B cell (primary cell): ENCODE measurements at regions of chr13 and their contacts with region 1.

Region 1: GRCh38 chr13:23579072-23579895 is 9.1 kb downstream of the TNFRSF19 start:
- DNase-seq: peak; percentile 93
- ATAC-seq: peak; percentile 96
- H3K4me3 ChIP-seq: peak overlapping the region; percentile 1 to 77 (median 70)
- H3K4me3 Mint-ChIP-seq: peak overlapping the region; percentile 83
- H3K27ac ChIP-seq: peak overlapping the region; percentile 66 to 83
- H3K27ac Mint-ChIP-seq: peak overlapping the region; percentile 59
- H3K4me1 ChIP-seq: peaks cover 12 to 16% of the 10 kb centered on the region in 2 donors
- H3K4me1 Mint-ChIP-seq: peaks cover 17% of the 10 kb centered on the region
- H3K27me3 ChIP-seq: peaks cover 3 to 30% (median 21%) of the 10 kb centered on the region in 4 experiments
- H3K27me3 Mint-ChIP-seq: peaks cover 56% of the 10 kb centered on the region
- CTCF ChIP-seq: no peak

Region 2: GRCh38 chr13:23384111-23384510 is 195.2 kb before region 1 on chr13:
- CTCF ChIA-PET with region 1: no interaction called
- POLR2A ChIA-PET with region 1: no interaction called
- intact Hi-C with region 1: loop called (anchors 1 kb)
- DNase-seq: peak; percentile 92
- ATAC-seq: peak; percentile 98
- H3K4me3 ChIP-seq: no peak overlapping the region
- H3K4me3 Mint-ChIP-seq: peak overlapping the region; percentile 40
- H3K27ac ChIP-seq: peak overlapping the region; percentile 37 to 68
- H3K27ac Mint-ChIP-seq: peak overlapping the region; percentile 76
- H3K4me1 ChIP-seq: peaks cover 30% of the 10 kb centered on the region in 2 donors
- H3K4me1 Mint-ChIP-seq: peaks cover 31% of the 10 kb centered on the region
- H3K27me3 ChIP-seq: peaks cover 0 to 4% (median 0%) of the 10 kb centered on the region in 4 experiments
- H3K27me3 Mint-ChIP-seq: peaks cover 4% of the 10 kb centered on the region
- CTCF ChIP-seq: no peak

Region 3: GRCh38 chr13:23496255-23496654 is 83.0 kb before region 1 on chr13:
- CTCF ChIA-PET with region 1: no interaction called
- POLR2A ChIA-PET with region 1: interaction called, 12 read pairs
- intact Hi-C with region 1: no loop called
- DNase-seq: no peak
- ATAC-seq: no peak
- H3K4me3 ChIP-seq: no peak overlapping the region
- H3K4me3 Mint-ChIP-seq: no peak overlapping the region
- H3K27ac ChIP-seq: no peak overlapping the region
- H3K27ac Mint-ChIP-seq: no peak overlapping the region
- H3K4me1 ChIP-seq: no peaks in the 10 kb centered on the region
- H3K4me1 Mint-ChIP-seq: no peaks in the 10 kb centered on the region
- H3K27me3 ChIP-seq: peaks cover 0 to 6% (median 1%) of the 10 kb centered on the region in 4 experiments
- H3K27me3 Mint-ChIP-seq: peaks cover 19% of the 10 kb centered on the region
- CTCF ChIP-seq: no peak

Region 4: GRCh38 chr13:23810685-23811240 is 231.5 kb after region 1 on chr13:
- CTCF ChIA-PET with region 1: no interaction called
- POLR2A ChIA-PET with region 1: no interaction called
- intact Hi-C with region 1: loop called (anchors 2 kb)
- DNase-seq: peak; percentile 67
- ATAC-seq: peak; percentile 56
- H3K4me3 ChIP-seq: no peak overlapping the region
- H3K4me3 Mint-ChIP-seq: peak overlapping the region; percentile 23
- H3K27ac ChIP-seq: peak overlapping the region in 1 of 2 donors; percentile 50
- H3K27ac Mint-ChIP-seq: peak overlapping the region; percentile 43
- H3K4me1 ChIP-seq: peaks cover 54 to 59% of the 10 kb centered on the region in 2 donors
- H3K4me1 Mint-ChIP-seq: peaks cover 43% of the 10 kb centered on the region
- H3K27me3 ChIP-seq: peaks cover 0 to 2% (median 0%) of the 10 kb centered on the region in 4 experiments
- H3K27me3 Mint-ChIP-seq: no peaks in the 10 kb centered on the region
- CTCF ChIP-seq: peak; percentile 79

Region 5: DNA sequence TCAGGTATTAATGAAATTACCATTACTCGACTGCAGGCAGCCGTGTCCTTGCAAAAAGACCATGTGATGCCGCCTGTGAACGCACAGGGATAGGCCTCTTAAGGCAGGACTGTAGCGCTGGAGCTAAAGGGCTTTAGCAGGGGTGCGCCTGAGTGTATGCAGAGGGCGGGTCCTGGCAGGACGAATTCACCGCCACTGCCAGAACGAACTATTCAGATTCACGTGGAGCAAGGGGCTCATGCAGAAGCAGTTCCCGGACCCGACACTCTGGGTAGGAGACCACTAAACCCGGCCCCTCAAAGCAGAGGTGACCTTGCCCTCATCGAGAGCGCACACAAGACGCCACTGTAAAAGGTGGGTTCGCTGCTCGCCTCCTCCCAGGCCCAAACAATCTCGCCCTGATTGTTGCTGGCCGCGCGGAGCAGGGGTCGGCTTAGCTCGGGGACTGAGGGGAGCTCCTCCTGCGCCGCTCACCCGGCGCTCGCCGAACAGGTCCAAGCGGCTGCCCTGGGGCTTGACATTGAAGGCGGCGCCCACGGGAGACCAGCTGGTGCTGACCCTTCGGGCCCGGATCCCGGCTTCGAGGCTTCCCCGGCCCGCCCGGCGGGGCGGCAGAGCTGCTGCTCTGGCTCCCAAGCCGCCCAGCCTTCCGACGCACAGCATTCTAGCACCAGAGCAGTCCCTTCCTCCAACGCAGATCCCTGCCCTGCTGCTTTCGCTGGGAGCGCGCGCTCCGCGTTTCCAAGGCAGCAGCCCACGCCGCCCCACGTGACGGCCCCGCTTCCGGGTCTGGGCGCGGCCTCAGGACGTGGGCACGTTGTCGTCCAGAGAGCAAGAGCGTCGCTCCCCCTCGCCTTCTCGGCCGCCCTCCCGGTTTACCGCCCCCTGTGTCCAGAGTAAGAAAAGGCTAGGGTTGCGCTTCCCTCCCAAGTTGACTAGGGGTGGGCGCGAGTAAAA is 309.7 kb after region 1 on chr13 and contains the start of gene MIPEP:
- CTCF ChIA-PET with region 1: interaction called, 3 read pairs
- POLR2A ChIA-PET with region 1: no interaction called
- intact Hi-C with region 1: loop called (anchors 1 kb)
- DNase-seq: peak; percentile 92
- ATAC-seq: peak; percentile 93
- H3K4me3 ChIP-seq: peak within 1 kb of the TSS; percentile 24 to 96 (median 80)
- H3K4me3 Mint-ChIP-seq: peak within 1 kb of the TSS; percentile 94
- H3K27ac ChIP-seq: peak within 1 kb of the TSS; percentile 42 to 86
- H3K27ac Mint-ChIP-seq: peak within 1 kb of the TSS; percentile 95
- H3K4me1 ChIP-seq: peaks cover 12 to 17% of the 10 kb centered on the region in 2 donors
- H3K4me1 Mint-ChIP-seq: peaks cover 23% of the 10 kb centered on the region
- H3K27me3 ChIP-seq: no peaks in the 10 kb centered on the region
- H3K27me3 Mint-ChIP-seq: no peaks in the 10 kb centered on the region
- CTCF ChIP-seq: peak; percentile 69
- total RNA-seq, gene MIPEP: 15.7 and 16.9 TPM in 2 replicates

Region 6: DNA sequence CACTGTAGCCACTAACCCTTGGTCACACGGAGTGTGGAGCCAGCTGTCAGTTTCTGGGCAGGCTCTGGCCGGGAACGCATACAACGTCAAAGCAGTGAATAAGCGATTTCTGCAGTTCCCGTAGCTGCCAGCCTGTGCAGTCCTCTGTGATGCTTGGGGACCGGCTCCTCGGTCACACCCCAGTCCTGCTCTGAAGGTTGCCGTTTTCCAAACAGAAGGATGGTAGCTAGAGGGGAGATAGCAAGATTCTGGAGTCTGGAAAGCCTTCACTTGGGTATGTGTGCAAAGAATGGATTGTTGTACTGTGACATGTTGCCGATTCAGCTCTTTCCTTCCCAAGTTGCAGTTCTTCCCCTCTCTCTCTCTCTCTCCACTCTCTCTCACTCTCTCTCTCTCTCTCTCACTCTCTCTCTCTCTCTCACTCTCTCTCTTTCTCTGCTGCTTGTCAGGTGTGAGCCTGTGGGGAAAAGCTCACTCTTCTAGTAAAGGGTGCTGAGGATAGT is 691.4 kb after region 1 on chr13:
- CTCF ChIA-PET with region 1: no interaction called
- POLR2A ChIA-PET with region 1: interaction called, 3 read pairs
- intact Hi-C with region 1: loop called (anchors 5 kb)
- DNase-seq: peak; percentile 76
- ATAC-seq: peak; percentile 52
- H3K4me3 ChIP-seq: peak overlapping the region; percentile 40 to 71 (median 62)
- H3K4me3 Mint-ChIP-seq: peak overlapping the region; percentile 89
- H3K27ac ChIP-seq: peak overlapping the region; percentile 84 to 89
- H3K27ac Mint-ChIP-seq: peak overlapping the region; percentile 98
- H3K4me1 ChIP-seq: peaks cover 55 to 66% of the 10 kb centered on the region in 2 donors
- H3K4me1 Mint-ChIP-seq: peaks cover 73% of the 10 kb centered on the region
- H3K27me3 ChIP-seq: no peaks in the 10 kb centered on the region
- H3K27me3 Mint-ChIP-seq: no peaks in the 10 kb centered on the region
- CTCF ChIP-seq: peak; percentile 13